ENCODE measurements at regions of chr1 and their contacts with region 1.

Region 1: GRCh38 chr1:209565759-209566678 is 17.5 kb upstream of the CAMK1G start:
- DNase-seq: peak; percentile 38 to 78 (median 72)
- ATAC-seq: peak; percentile 74
- H3K4me3 ChIP-seq: no peak overlapping the region
- H3K4me3 Mint-ChIP-seq: no peak overlapping the region
- H3K27ac ChIP-seq: no peak overlapping the region
- H3K27ac Mint-ChIP-seq: no peak overlapping the region
- H3K4me1 ChIP-seq: no peaks in the 10 kb centered on the region
- H3K4me1 Mint-ChIP-seq: peaks cover 6% of the 10 kb centered on the region
- H3K27me3 ChIP-seq: peaks cover 0 to 3% of the 10 kb centered on the region in 2 experiments
- H3K27me3 Mint-ChIP-seq: peaks cover 33% of the 10 kb centered on the region
- CTCF ChIP-seq: peak; percentile 70

Region 2: GRCh38 chr1:209202830-209203439 is 363.1 kb before region 1 on chr1:
- CTCF ChIA-PET with region 1: interaction called, 6 read pairs
- POLR2A ChIA-PET with region 1: no interaction called
- intact Hi-C with region 1: loop called in 1 of 2 experiments (anchors 5 kb)
- DNase-seq: peak in 2 of 9 experiments; percentile 14 to 37
- ATAC-seq: no peak
- H3K4me3 ChIP-seq: no peak overlapping the region
- H3K4me3 Mint-ChIP-seq: no peak overlapping the region
- H3K27ac ChIP-seq: no peak overlapping the region
- H3K27ac Mint-ChIP-seq: no peak overlapping the region
- H3K4me1 ChIP-seq: peaks cover 2% of the 10 kb centered on the region
- H3K4me1 Mint-ChIP-seq: peaks cover 5% of the 10 kb centered on the region
- H3K27me3 ChIP-seq: peaks cover 2 to 3% of the 10 kb centered on the region in 2 experiments
- H3K27me3 Mint-ChIP-seq: peaks cover 17% of the 10 kb centered on the region
- CTCF ChIP-seq: peak; percentile 61

Region 3: GRCh38 chr1:209590405-209590804 is 24.4 kb after region 1 on chr1:
- CTCF ChIA-PET with region 1: interaction called, 14 read pairs
- POLR2A ChIA-PET with region 1: no interaction called
- intact Hi-C with region 1: no loop called
- DNase-seq: no peak
- ATAC-seq: no peak
- H3K4me3 ChIP-seq: no peak overlapping the region
- H3K4me3 Mint-ChIP-seq: no peak overlapping the region
- H3K27ac ChIP-seq: no peak overlapping the region
- H3K27ac Mint-ChIP-seq: no peak overlapping the region
- H3K4me1 ChIP-seq: no peaks in the 10 kb centered on the region
- H3K4me1 Mint-ChIP-seq: no peaks in the 10 kb centered on the region
- H3K27me3 ChIP-seq: no peaks in the 10 kb centered on the region
- H3K27me3 Mint-ChIP-seq: peaks cover 39% of the 10 kb centered on the region
- CTCF ChIP-seq: no peak

Region 4: DNA sequence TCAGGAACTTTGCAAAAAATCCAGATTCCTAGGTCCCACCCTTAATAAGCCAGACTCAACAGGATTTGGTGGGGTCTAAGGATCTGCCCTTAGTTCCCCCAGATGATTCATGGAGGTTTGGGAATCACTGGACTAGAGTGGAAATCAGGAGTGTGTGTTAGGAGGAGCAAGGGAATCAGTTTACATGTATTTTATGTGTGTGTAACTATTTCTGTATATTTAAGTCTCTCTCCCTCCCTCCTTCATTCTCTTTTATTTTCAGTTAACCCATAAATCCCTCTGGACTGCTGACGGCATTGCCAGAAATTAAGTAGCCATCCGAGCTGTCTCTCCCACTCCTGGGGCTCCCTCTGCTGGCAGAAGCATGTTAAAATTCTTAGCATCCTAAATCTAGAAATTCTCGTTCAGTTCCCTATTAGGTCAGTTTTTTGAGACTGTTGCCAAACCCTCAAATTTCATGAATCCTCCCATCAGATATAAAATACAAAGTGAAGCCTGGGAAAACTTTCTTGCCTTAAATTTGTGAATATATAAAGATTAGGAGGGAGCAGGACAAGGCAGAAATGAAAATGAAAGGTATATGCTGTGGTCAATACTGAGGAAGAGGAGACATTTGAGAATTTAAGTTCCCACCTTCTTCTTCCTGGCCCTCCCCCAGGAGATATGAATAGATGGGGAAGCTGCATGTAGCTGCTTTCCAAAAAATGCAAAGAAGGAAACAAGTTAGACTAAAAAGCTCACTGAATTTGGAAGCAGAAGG is 126.9 kb after region 1 on chr1:
- CTCF ChIA-PET with region 1: interaction called, 8 read pairs
- POLR2A ChIA-PET with region 1: no interaction called
- intact Hi-C with region 1: loop called (anchors 1 kb)
- DNase-seq: peak; percentile 40 to 77 (median 66)
- ATAC-seq: peak; percentile 52
- H3K4me3 ChIP-seq: no peak overlapping the region
- H3K4me3 Mint-ChIP-seq: no peak overlapping the region
- H3K27ac ChIP-seq: no peak overlapping the region
- H3K27ac Mint-ChIP-seq: no peak overlapping the region
- H3K4me1 ChIP-seq: no peaks in the 10 kb centered on the region
- H3K4me1 Mint-ChIP-seq: peaks cover 10% of the 10 kb centered on the region
- H3K27me3 ChIP-seq: no peaks in the 10 kb centered on the region
- H3K27me3 Mint-ChIP-seq: no peaks in the 10 kb centered on the region
- CTCF ChIP-seq: peak; percentile 91

Region 5: DNA sequence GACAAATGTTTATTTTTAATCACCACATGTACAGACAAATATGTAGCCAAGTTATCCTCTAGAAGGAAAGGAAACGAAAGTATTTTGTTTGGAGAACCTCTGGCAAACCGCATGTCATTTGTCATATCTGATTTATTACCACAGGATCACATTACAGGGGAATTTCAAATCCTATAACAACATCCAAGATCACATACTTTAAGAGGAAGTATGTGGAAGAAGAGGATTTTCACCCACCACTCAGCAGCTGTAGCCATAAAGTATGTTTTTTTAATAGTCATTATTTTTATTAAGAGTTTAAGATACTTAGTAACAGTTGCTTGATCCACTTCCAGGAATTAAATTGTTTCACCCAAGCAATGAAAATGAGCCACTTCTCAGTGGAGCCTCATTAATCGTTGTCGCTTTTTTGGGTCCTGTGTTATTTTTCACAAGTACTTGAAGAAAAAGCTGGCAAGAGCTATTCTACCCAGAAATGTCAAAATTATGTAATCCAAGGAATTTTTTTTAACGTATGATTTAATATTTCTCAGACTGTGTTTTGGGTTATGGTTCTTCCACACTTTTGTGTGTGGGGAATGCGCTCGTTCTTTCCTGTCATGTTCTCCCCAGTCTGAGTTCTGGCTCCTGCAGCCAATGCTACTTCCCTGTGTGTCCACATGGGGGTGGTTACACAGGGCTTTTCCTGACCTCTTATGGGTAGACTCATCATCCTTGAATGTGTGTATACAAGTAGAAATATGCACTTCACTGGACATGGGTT is 673.5 kb after region 1 on chr1:
- CTCF ChIA-PET with region 1: no interaction called
- POLR2A ChIA-PET with region 1: no interaction called
- intact Hi-C with region 1: no loop called
- DNase-seq: no peak
- ATAC-seq: no peak
- H3K4me3 ChIP-seq: no peak overlapping the region
- H3K4me3 Mint-ChIP-seq: no peak overlapping the region
- H3K27ac ChIP-seq: no peak overlapping the region
- H3K27ac Mint-ChIP-seq: no peak overlapping the region
- H3K4me1 ChIP-seq: no peaks in the 10 kb centered on the region
- H3K4me1 Mint-ChIP-seq: peaks cover 1% of the 10 kb centered on the region
- H3K27me3 ChIP-seq: peaks cover 5 to 11% of the 10 kb centered on the region in 2 experiments
- H3K27me3 Mint-ChIP-seq: peaks cover 63% of the 10 kb centered on the region
- CTCF ChIP-seq: no peak